Psoas muscle (tissue), 8 donors: ENCODE measurements at regions of chr1 and their contacts with region 1.

Region 1: GRCh38 chr1:17053685-17054410 is at the start of gene SDHB:
- DNase-seq: peak; percentile 98 to 99
- ATAC-seq: peak; percentile 97 to 99 (median 97)
- H3K4me3 ChIP-seq: peak within 1 kb of the TSS; percentile 93
- H3K27ac ChIP-seq: peak within 1 kb of the TSS; percentile 94
- H3K4me1 ChIP-seq: peaks cover 15% of the 10 kb centered on the region
- H3K27me3 ChIP-seq: no peaks in the 10 kb centered on the region
- CTCF ChIP-seq: no peak
- total RNA-seq, gene SDHB: 190 to 319 (median 208) TPM

Region 2: GRCh38 chr1:17016317-17016661 is 37.6 kb before region 1 on chr1:
- intact Hi-C with region 1: loop called in 1 of 2 experiments (anchors 5 kb)
- DNase-seq: no peak
- ATAC-seq: no peak
- H3K4me3 ChIP-seq: no peak overlapping the region
- H3K27ac ChIP-seq: no peak overlapping the region
- H3K4me1 ChIP-seq: no peaks in the 10 kb centered on the region
- H3K27me3 ChIP-seq: no peaks in the 10 kb centered on the region
- CTCF ChIP-seq: no peak

Region 3: DNA sequence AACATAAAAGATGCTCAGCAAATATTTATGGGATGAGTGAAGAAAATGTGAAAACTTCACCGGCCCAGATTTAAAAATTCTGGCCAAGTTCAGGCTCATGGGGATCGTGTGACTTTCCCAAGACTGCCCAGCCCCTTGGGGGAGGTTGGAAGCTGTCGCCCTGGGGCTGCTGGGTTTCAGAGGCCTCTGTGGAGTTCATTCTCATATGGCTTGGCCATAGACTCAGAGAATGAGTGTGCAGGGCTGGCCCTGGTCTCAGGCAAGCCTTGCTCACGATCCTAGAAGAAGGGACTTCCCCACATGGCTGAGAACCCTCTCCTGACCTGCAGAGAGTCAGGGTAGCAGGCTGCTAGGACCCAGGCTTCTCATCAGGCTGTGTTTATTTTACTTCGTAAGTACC is 40.8 kb after region 1 on chr1:
- intact Hi-C with region 1: no loop called
- DNase-seq: no peak
- ATAC-seq: no peak
- H3K4me3 ChIP-seq: no peak overlapping the region
- H3K27ac ChIP-seq: peak overlapping the region; percentile 60
- H3K4me1 ChIP-seq: peaks cover 61% of the 10 kb centered on the region
- H3K27me3 ChIP-seq: no peaks in the 10 kb centered on the region
- CTCF ChIP-seq: no peak